ENCODE measurements at regions of chr22 and their contacts with region 1.

Region 1: DNA sequence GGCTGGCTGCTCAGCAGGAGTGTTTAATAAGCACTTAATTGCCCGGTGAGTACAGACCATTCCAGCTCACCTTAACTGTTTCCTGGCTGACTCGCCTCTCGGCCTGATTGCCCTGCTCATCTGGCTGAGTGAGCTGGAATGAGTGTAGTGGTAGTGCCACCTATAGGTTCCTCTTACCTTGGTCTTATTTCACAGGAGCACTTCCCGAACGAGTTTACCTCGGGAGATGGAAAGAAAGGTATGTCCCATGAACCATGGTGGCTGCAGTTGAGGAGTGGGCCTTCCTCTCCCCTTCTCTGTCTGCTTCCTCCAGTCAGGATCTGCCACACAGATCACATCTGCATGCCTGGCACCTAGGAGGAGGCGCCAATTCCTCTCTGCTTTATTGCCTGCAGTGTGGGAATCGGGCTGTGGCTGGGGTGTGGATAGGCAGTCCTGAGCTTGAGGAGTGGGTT is 26.7 kb downstream of the UPB1 start:
- DNase-seq: peak; percentile 71 to 74
- ATAC-seq: peak; percentile 92 to 93; a peak in 5 of 6 replicates
- H3K4me3 ChIP-seq: no peak overlapping the region
- H3K27ac ChIP-seq: peak overlapping the region in 1 of 2 experiments; percentile 61; a peak in 2 of 6 replicates
- H3K4me1 ChIP-seq: peaks cover 12% of the 10 kb centered on the region
- CTCF ChIP-seq: peak; percentile 60
- EP300 ChIP-seq: no peak
- POLR2A ChIP-seq: no peak
- RAD21 ChIP-seq: peak; percentile 78 to 84

Region 2: GRCh38 chr22:24423519-24424000 is 98.3 kb before region 1 on chr22:
- CTCF ChIA-PET with region 1: interaction called, 16 read pairs
- POLR2A ChIA-PET with region 1: no interaction called
- DNase-seq: peak; percentile 21 to 57
- ATAC-seq: peak; percentile 57 to 72
- H3K4me3 ChIP-seq: peak overlapping the region; percentile 62
- H3K27ac ChIP-seq: peak overlapping the region; percentile 56 to 92; a peak in 4 of 6 replicates
- H3K4me1 ChIP-seq: no peaks in the 10 kb centered on the region
- CTCF ChIP-seq: peak; percentile 73
- EP300 ChIP-seq: no peak
- POLR2A ChIP-seq: no peak
- RAD21 ChIP-seq: peak; percentile 37 to 77; a peak in 4 of 5 replicates

Region 3: GRCh38 chr22:24433813-24434470 is 87.9 kb before region 1 on chr22:
- CTCF ChIA-PET with region 1: interaction called, 13 read pairs
- POLR2A ChIA-PET with region 1: no interaction called
- DNase-seq: no peak
- ATAC-seq: no peak
- H3K4me3 ChIP-seq: no peak overlapping the region
- H3K27ac ChIP-seq: no peak overlapping the region
- H3K4me1 ChIP-seq: no peaks in the 10 kb centered on the region
- CTCF ChIP-seq: no peak
- EP300 ChIP-seq: no peak
- POLR2A ChIP-seq: no peak
- RAD21 ChIP-seq: no peak

Region 4: DNA sequence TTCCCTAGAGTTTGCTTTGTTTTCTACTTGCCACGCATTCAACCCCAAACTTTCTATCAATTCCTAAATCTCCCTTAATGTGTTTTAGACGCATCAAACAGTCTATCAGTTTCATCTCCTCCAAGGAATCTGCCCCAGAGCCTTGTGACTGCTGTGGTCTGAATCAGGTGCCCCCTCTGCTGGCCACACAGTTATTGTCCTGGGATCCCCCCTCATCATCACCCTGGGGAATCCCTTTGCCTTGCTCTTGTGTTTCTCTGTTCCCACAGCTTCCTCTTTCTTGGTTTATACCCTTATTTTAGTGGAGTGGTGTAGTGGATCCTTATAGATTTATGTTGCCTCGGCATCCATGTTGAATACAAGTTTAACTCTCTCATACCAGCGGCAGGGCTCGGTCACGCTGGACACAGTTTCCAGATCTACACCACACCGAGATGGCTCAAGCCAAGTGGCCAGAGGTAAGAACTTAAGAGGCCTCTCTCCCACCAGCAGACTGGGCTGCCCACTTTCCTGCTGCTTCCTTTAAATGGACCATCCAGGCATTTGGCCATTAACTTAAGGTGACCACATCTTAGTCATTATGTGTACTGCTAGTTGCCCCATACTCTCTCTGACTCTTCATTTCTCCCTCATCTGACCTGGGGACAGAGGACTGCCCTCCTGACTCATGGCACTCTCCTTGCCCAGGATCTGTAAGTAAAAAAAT is 18.5 kb before region 1 on chr22:
- CTCF ChIA-PET with region 1: interaction called, 18 read pairs
- POLR2A ChIA-PET with region 1: no interaction called
- DNase-seq: peak; percentile 36 to 71
- ATAC-seq: peak; percentile 89 to 91
- H3K4me3 ChIP-seq: no peak overlapping the region
- H3K27ac ChIP-seq: no peak overlapping the region
- H3K4me1 ChIP-seq: peaks cover 25% of the 10 kb centered on the region
- CTCF ChIP-seq: peak; percentile 62
- EP300 ChIP-seq: no peak
- POLR2A ChIP-seq: no peak
- RAD21 ChIP-seq: peak; percentile 67 to 75

Region 5: GRCh38 chr22:24532103-24532520 is 10.3 kb after region 1 on chr22:
- CTCF ChIA-PET with region 1: interaction called, 17 read pairs
- POLR2A ChIA-PET with region 1: interaction called, 3 read pairs
- DNase-seq: no peak
- ATAC-seq: no peak
- H3K4me3 ChIP-seq: no peak overlapping the region
- H3K27ac ChIP-seq: no peak overlapping the region
- H3K4me1 ChIP-seq: no peaks in the 10 kb centered on the region; the same call in 2 of the 3 replicates
- CTCF ChIP-seq: no peak
- EP300 ChIP-seq: no peak
- POLR2A ChIP-seq: no peak
- RAD21 ChIP-seq: no peak

Measured in A549 (cell line).